Ovary (tissue), 10 donors: ENCODE measurements at regions of chr1 and their contacts with region 1.

Region 1: GRCh38 chr1:200802865-200803512 is 64.3 kb downstream of the CAMSAP2 start:
- DNase-seq: peak; percentile 70 to 82 (median 76)
- H3K4me3 ChIP-seq: no peak overlapping the region
- H3K27ac ChIP-seq: no peak overlapping the region
- H3K4me1 ChIP-seq: no peaks in the 10 kb centered on the region
- H3K27me3 ChIP-seq: no peaks in the 10 kb centered on the region
- CTCF ChIP-seq: peak; percentile 30 to 92 (median 84)
- EP300 ChIP-seq: no peak
- POLR2A ChIP-seq: no peak

Region 2: DNA sequence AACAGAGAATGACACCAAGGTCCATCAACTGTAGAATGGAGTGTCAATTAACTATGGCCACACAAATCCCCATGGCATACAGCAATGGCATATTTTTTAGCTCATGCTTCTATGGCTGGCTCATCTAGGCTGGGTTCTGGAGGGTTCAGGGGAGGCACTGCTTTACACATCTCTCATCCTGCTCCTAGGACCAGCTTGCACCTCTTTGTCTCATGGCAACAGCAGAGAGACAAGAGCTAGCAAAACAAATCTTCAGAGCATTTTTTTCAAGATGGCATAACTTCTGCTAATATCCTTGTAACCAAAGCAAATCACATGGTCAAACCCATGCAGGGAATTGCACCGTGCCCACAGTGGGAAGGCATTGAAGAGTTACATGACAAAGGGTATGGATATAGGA is 264.8 kb before region 1 on chr1:
- intact Hi-C with region 1: no loop called
- DNase-seq: no peak
- H3K4me3 ChIP-seq: no peak overlapping the region
- H3K27ac ChIP-seq: no peak overlapping the region
- H3K4me1 ChIP-seq: no peaks in the 10 kb centered on the region
- H3K27me3 ChIP-seq: no peaks in the 10 kb centered on the region
- CTCF ChIP-seq: no peak
- EP300 ChIP-seq: no peak
- POLR2A ChIP-seq: no peak

Region 3: GRCh38 chr1:200620273-200621131 is 182.5 kb before region 1 on chr1 and contains the start of gene KIF14:
- intact Hi-C with region 1: loop called in 3 of 4 experiments (anchors 2 to 10 kb)
- DNase-seq: peak; percentile 83 to 92 (median 89)
- H3K4me3 ChIP-seq: peak within 1 kb of the TSS; percentile 49
- H3K27ac ChIP-seq: no peak within 1 kb of the TSS
- H3K4me1 ChIP-seq: peaks cover 2% of the 10 kb centered on the region
- H3K27me3 ChIP-seq: no peaks in the 10 kb centered on the region
- CTCF ChIP-seq: no peak
- EP300 ChIP-seq: no peak
- POLR2A ChIP-seq: no peak
- total RNA-seq, gene KIF14: 0.03 to 0.40 (median 0.11) TPM in 5 of 7 donors, not detected in the others

Region 4: GRCh38 chr1:200669314-200670241 is 133.4 kb before region 1 on chr1 and contains the start of gene DDX59:
- intact Hi-C with region 1: loop called in 1 of 4 experiments (anchors 10 kb)
- DNase-seq: peak; percentile 96 to 97 (median 97)
- H3K4me3 ChIP-seq: peak within 1 kb of the TSS; percentile 98
- H3K27ac ChIP-seq: peak within 1 kb of the TSS; percentile 86 to 97
- H3K4me1 ChIP-seq: peaks cover 10% of the 10 kb centered on the region
- H3K27me3 ChIP-seq: no peaks in the 10 kb centered on the region
- CTCF ChIP-seq: peak in 1 of 3 donors; percentile 59
- EP300 ChIP-seq: peak; percentile 76
- POLR2A ChIP-seq: peak; percentile 97
- total RNA-seq, gene DDX59: 16.4 to 25.6 (median 19.5) TPM